Esophagus squamous epithelium (tissue), 5 donors: ENCODE measurements at regions of chr2 and their contacts with region 1.

Region 1: GRCh38 chr2:205680067-205680466 is 2.2 kb upstream of the NRP2 start:
- DNase-seq: no peak
- H3K4me3 ChIP-seq: no peak overlapping the region
- H3K27ac ChIP-seq: peak overlapping the region in 3 of 4 donors; percentile 1 to 5 (median 3)
- H3K4me1 ChIP-seq: peaks cover 0 to 74% (median 0%) of the 10 kb centered on the region in 3 donors
- H3K27me3 ChIP-seq: peaks cover 0 to 16% (median 0%) of the 10 kb centered on the region in 4 donors
- CTCF ChIP-seq: peak; percentile 39 to 74 (median 64)
- POLR2A ChIP-seq: no peak

Region 2: GRCh38 chr2:204871231-204871953 is 808.7 kb before region 1 on chr2:
- intact Hi-C with region 1: loop called (anchors 10 kb)
- DNase-seq: no peak
- H3K4me3 ChIP-seq: no peak overlapping the region
- H3K27ac ChIP-seq: no peak overlapping the region
- H3K4me1 ChIP-seq: peaks cover 0 to 25% (median 19%) of the 10 kb centered on the region in 3 donors
- H3K27me3 ChIP-seq: no peaks in the 10 kb centered on the region
- CTCF ChIP-seq: peak in 5 of 6 experiments; percentile 6 to 48 (median 29)
- POLR2A ChIP-seq: no peak

Region 3: GRCh38 chr2:205427112-205427511 is 253.0 kb before region 1 on chr2:
- intact Hi-C with region 1: no loop called
- DNase-seq: no peak
- H3K4me3 ChIP-seq: no peak overlapping the region
- H3K27ac ChIP-seq: no peak overlapping the region
- H3K4me1 ChIP-seq: no peaks in the 10 kb centered on the region
- H3K27me3 ChIP-seq: no peaks in the 10 kb centered on the region
- CTCF ChIP-seq: no peak
- POLR2A ChIP-seq: no peak

Region 4: DNA sequence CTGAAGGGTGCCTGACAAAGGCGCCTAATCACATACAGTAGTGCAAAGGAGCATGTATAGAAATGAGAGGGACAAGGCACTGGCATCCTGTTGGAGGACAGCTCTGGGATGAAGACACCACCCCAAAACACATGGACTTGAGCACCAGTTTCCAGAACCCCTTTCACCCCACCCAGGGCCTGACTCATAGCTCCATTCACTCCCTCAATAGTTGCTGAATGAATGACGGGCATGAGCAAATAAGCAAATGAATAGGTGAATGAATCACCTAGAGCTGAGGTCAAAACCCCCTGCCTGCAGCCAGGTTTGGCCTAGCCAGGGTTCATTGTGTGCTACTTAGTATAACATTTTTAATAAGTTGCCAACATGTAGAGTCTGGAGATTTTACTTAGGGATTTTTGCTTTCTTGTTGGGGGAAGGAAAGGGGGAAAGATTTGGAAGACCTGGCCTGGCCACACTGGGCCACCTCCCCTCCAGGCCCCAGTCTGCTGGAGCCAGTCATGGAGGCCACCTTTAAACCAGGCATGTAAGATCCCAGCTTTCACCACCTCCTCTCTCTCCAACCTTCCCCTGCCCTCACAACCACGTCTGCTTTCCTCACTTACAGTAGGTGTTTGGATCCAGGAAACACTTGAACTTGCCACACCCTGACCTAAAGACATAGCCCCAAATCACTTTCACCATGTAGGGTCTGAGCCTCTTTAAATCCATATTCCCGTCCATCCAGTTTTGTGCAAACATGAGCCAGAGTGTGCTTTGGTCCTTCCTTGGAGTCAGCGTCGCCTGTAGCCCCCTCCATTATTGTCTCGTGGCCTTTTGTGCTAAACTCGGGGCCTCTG is 68.8 kb after region 1 on chr2:
- intact Hi-C with region 1: loop called (anchors 10 kb)
- DNase-seq: no peak
- H3K4me3 ChIP-seq: no peak overlapping the region
- H3K27ac ChIP-seq: peak overlapping the region; percentile 79 to 87 (median 86)
- H3K4me1 ChIP-seq: peaks cover 20 to 80% (median 39%) of the 10 kb centered on the region in 3 donors
- H3K27me3 ChIP-seq: no peaks in the 10 kb centered on the region
- CTCF ChIP-seq: no peak
- POLR2A ChIP-seq: no peak

Region 5: GRCh38 chr2:205885492-205886099 is 205.5 kb after region 1 on chr2:
- intact Hi-C with region 1: loop called (anchors 10 kb)
- DNase-seq: no peak
- H3K4me3 ChIP-seq: no peak overlapping the region
- H3K27ac ChIP-seq: no peak overlapping the region
- H3K4me1 ChIP-seq: peaks cover 0 to 11% (median 0%) of the 10 kb centered on the region in 3 donors
- H3K27me3 ChIP-seq: no peaks in the 10 kb centered on the region
- CTCF ChIP-seq: peak; percentile 52 to 93 (median 90)
- POLR2A ChIP-seq: no peak